Activated naive CD8-positive, alpha-beta T cell treated with anti-CD3 and anti-CD28 coated beads, Interleukin-2, amount 10 ng/mL, durations not matched to agents 7 days and 5 days (primary cell): ENCODE measurements at regions of chr19 and their contacts with region 1.

Region 1: DNA sequence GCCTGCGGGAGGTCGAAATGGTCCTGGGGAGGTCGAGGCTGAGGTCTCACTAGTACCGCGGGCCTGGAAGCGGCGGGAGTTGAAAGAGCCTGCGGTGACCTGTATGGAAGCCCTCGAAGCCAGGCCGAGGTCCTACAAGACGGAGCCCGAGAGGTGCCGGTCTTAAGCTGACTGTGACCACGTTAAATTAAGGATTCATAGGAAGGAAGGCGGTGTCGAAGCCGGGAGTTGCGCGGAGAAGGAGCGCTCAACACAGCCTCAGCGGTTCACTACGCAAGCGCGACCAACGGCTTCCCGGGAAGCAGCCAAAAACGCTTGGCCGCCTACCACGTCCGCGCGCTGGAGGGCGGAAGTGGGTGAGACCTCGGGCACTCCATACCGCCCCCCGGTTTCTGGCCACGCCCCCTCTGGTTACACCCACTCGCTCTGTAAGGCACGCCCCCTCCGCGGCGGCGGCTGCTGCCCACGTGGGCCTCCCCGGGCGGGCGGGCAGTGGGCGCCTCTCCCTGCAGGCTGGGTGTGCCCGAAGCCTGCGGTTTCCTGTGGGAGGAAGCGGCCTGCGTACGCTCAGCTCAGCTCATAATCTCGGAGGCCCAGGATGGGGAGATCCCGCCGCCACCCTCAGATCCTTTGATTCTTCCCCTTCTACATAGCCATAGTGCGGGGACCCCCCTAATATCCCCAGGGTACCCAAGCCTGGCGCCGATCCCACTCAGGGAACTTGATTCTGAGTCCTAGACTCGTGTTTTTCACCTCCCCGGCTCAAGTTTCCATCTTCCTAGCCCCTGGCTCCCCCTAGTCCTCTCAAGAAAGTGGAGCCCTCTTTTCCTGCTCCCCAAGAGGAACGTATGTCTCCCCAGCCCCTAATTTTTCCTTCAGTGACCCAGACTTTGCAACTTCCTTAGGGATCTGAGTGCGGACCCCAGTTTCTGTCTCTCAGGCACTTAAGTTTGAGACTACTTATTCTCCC is 3.4 kb upstream of the EMP3 start:
- DNase-seq: peak; percentile 100
- ATAC-seq: peak; percentile 71
- H3K4me3 Mint-ChIP-seq: peak overlapping the region; percentile 97
- H3K27ac Mint-ChIP-seq: peak overlapping the region; percentile 100
- H3K4me1 Mint-ChIP-seq: peaks cover 49% of the 10 kb centered on the region
- H3K27me3 Mint-ChIP-seq: no peaks in the 10 kb centered on the region

Region 2: GRCh38 chr19:48333467-48334384 is 11.8 kb after region 1 on chr19:
- POLR2A ChIA-PET with region 1: interaction called, 223 read pairs
- DNase-seq: peak; percentile 97
- ATAC-seq: peak; percentile 69
- H3K4me3 Mint-ChIP-seq: peak overlapping the region; percentile 88
- H3K27ac Mint-ChIP-seq: peak overlapping the region; percentile 93
- H3K4me1 Mint-ChIP-seq: peaks cover 37% of the 10 kb centered on the region
- H3K27me3 Mint-ChIP-seq: no peaks in the 10 kb centered on the region

Region 3: GRCh38 chr19:48391107-48391986 is 69.4 kb after region 1 on chr19 and contains the start of gene KDELR1:
- POLR2A ChIA-PET with region 1: interaction called, 11 read pairs
- DNase-seq: peak; percentile 91
- ATAC-seq: peak; percentile 62
- H3K4me3 Mint-ChIP-seq: peak within 1 kb of the TSS; percentile 97
- H3K27ac Mint-ChIP-seq: peak within 1 kb of the TSS; percentile 95
- H3K4me1 Mint-ChIP-seq: peaks cover 19% of the 10 kb centered on the region
- H3K27me3 Mint-ChIP-seq: peaks cover 35% of the 10 kb centered on the region
- total RNA-seq, gene KDELR1: 75.8 to 75.9 TPM